Esophagus squamous epithelium (tissue), 5 donors: ENCODE measurements at regions of chr9 and their contacts with region 1.

Region 1: GRCh38 chr9:126228781-126229444 is 97.7 kb upstream of the MVB12B start:
- DNase-seq: no peak
- H3K4me3 ChIP-seq: no peak overlapping the region
- H3K27ac ChIP-seq: no peak overlapping the region
- H3K4me1 ChIP-seq: peaks cover 0 to 4% (median 0%) of the 10 kb centered on the region in 3 donors
- H3K27me3 ChIP-seq: peaks cover 0 to 65% (median 0%) of the 10 kb centered on the region in 4 donors
- CTCF ChIP-seq: peak; percentile 73 to 92 (median 88)
- POLR2A ChIP-seq: no peak

Region 2: DNA sequence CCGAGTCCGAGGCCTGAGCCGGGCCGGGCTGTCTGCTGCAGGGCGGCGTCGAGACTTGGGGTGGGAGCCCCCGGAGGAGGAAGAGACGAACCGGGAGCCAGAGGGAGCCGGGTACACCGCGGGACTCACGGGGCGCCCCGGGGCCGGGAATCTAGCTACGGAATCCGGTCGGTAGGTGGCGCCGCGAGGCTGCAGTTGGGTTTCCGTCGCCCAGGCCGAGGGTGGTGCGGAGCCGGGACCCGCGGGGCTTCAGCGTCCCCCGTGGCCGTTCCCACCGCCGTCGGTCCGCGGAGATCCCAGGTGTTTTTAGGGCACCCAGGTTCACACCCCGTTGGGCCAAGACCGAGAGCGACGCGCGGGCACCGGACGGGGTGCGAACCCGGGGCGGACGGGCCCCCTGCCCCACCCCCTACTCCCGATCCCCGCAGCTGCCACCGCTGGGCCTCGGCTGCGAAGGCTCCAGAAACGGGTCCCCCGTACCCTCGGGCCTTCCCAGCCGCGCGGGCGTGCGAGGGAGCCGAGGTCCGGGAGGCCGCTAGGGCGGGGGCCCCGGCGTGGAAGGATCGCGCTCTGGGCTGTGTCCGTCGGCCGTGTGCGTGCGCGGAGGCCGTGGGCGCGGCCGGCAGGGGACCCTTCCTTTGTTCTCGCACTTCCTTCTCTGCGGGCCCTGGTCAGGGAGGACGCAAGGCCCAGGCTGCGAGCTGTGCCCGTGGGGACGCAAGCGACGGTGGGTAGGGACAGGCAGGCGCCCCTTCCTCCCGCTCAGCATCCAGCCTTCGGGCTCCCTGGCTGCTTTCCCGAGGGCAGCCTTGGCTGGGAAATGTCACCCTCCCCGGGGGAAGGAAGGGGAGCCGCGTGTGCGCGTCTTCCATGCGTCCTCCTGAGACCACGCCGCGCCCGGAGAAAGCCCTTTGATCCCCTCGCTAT is 820.7 kb before region 1 on chr9:
- intact Hi-C with region 1: loop called (anchors 5 kb)
- DNase-seq: no peak
- H3K4me3 ChIP-seq: peak overlapping the region; percentile 44 to 86 (median 58)
- H3K27ac ChIP-seq: peak overlapping the region; percentile 23 to 73 (median 50)
- H3K4me1 ChIP-seq: peaks cover 0 to 19% (median 4%) of the 10 kb centered on the region in 3 donors
- H3K27me3 ChIP-seq: peaks cover 0 to 23% (median 3%) of the 10 kb centered on the region in 4 donors
- CTCF ChIP-seq: peak; percentile 47 to 91 (median 72)
- POLR2A ChIP-seq: no peak

Region 3: DNA sequence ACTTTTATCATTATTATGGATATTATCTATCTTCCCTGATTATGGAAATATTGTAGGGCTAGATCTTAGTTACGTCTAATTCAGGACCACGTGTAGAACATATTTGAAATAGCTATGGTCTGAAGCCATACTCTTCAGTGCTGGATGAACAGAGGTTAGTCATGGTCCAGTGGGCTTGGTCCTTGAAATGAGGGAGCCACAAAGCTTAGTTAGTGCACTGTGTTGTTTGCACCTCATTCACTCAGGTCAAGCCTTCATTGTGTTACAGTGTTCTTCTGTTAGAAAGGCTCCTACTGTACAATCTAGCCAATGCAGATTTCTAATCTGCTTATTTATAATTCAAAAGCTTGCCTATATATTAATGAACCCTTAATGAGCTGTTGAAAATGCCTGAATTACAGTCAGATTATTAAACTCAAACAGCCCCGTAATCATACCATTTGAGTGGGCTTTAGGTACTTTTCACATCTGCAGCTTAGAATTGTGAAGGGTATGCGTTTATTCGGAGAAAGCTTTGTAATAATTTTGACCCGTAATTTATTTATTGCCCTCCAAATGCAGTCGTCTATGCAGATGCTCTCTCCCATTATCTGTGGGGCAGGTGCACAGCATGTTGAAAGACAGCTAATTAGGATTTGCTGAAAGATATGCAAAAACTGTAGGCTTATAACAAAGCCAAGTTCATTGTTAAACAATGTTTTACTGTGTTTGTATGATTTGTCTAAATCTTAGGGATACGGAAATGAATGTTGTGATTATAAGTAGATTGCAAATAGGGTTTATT is 316.9 kb before region 1 on chr9:
- intact Hi-C with region 1: no loop called
- DNase-seq: no peak
- H3K4me3 ChIP-seq: no peak overlapping the region
- H3K27ac ChIP-seq: no peak overlapping the region
- H3K4me1 ChIP-seq: no peaks in the 10 kb centered on the region
- H3K27me3 ChIP-seq: no peaks in the 10 kb centered on the region
- CTCF ChIP-seq: no peak
- POLR2A ChIP-seq: no peak